ENCODE measurements at regions of chr2 and their contacts with region 1.

Region 1: GRCh38 chr2:207710814-207711740 is at the start of gene CCNYL1:
- DNase-seq: peak; percentile 99
- H3K4me3 Mint-ChIP-seq: peak within 1 kb of the TSS; percentile 88
- H3K27ac Mint-ChIP-seq: peak within 1 kb of the TSS; percentile 82
- H3K4me1 Mint-ChIP-seq: peaks cover 25% of the 10 kb centered on the region
- H3K27me3 Mint-ChIP-seq: no peaks in the 10 kb centered on the region
- total RNA-seq, gene CCNYL1: 5.7 to 6.4 TPM

Region 2: GRCh38 chr2:206915121-206915520 is 796.0 kb before region 1 on chr2:
- CTCF ChIA-PET with region 1: no interaction called
- POLR2A ChIA-PET with region 1: no interaction called
- intact Hi-C with region 1: no loop called
- DNase-seq: peak; percentile 31
- H3K4me3 Mint-ChIP-seq: no peak overlapping the region
- H3K27ac Mint-ChIP-seq: no peak overlapping the region
- H3K4me1 Mint-ChIP-seq: no peaks in the 10 kb centered on the region
- H3K27me3 Mint-ChIP-seq: peaks cover 2% of the 10 kb centered on the region

Region 3: GRCh38 chr2:207558106-207558505 is 153.0 kb before region 1 on chr2:
- CTCF ChIA-PET with region 1: no interaction called
- POLR2A ChIA-PET with region 1: no interaction called
- intact Hi-C with region 1: no loop called
- DNase-seq: no peak
- H3K4me3 Mint-ChIP-seq: no peak overlapping the region
- H3K27ac Mint-ChIP-seq: peak overlapping the region; percentile 43
- H3K4me1 Mint-ChIP-seq: peaks cover 19% of the 10 kb centered on the region
- H3K27me3 Mint-ChIP-seq: no peaks in the 10 kb centered on the region

Region 4: GRCh38 chr2:207692206-207693065 is 18.6 kb before region 1 on chr2:
- CTCF ChIA-PET with region 1: interaction called, 8 read pairs
- POLR2A ChIA-PET with region 1: no interaction called
- intact Hi-C with region 1: loop called (anchors 1 kb)
- DNase-seq: peak; percentile 54
- H3K4me3 Mint-ChIP-seq: no peak overlapping the region
- H3K27ac Mint-ChIP-seq: no peak overlapping the region
- H3K4me1 Mint-ChIP-seq: peaks cover 7% of the 10 kb centered on the region
- H3K27me3 Mint-ChIP-seq: peaks cover 1% of the 10 kb centered on the region

Region 5: DNA sequence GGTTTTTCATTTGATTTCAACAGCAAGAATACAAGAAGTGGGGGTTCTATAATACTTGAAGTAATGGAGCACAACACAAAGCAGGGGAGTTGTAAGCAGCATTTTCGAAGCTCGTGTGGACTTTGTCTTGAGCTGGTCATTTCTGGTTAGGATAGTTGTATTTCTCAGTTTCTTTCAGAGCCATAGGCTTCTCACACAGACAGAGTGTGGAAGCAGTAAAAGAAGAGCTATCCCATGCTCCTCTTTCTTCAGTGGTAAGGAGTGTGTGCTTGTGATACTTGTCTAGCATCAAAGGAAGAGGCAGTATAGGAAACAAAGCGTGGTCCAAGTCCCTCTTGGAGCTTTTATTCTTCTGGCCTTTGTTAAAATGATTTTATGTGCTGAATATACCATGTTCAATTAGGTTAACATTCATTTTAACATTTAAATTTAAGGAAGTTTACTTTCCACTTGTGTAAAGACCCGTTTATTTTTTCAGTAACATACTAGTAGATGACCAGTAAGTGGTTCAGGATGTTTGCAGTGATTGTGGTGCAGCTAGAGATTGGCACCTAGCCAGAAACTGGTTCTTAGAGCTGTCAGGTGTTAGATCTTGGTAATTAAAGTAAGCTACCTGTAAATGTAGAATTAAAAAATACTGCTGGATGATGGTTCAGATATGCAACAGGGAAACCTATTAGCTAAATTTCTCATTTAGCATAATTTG is 14.9 kb after region 1 on chr2:
- CTCF ChIA-PET with region 1: interaction called, 6 read pairs
- POLR2A ChIA-PET with region 1: interaction called, 15 read pairs
- intact Hi-C with region 1: loop called (anchors 1 kb)
- DNase-seq: no peak
- H3K4me3 Mint-ChIP-seq: no peak overlapping the region
- H3K27ac Mint-ChIP-seq: no peak overlapping the region
- H3K4me1 Mint-ChIP-seq: peaks cover 37% of the 10 kb centered on the region
- H3K27me3 Mint-ChIP-seq: no peaks in the 10 kb centered on the region

Region 6: DNA sequence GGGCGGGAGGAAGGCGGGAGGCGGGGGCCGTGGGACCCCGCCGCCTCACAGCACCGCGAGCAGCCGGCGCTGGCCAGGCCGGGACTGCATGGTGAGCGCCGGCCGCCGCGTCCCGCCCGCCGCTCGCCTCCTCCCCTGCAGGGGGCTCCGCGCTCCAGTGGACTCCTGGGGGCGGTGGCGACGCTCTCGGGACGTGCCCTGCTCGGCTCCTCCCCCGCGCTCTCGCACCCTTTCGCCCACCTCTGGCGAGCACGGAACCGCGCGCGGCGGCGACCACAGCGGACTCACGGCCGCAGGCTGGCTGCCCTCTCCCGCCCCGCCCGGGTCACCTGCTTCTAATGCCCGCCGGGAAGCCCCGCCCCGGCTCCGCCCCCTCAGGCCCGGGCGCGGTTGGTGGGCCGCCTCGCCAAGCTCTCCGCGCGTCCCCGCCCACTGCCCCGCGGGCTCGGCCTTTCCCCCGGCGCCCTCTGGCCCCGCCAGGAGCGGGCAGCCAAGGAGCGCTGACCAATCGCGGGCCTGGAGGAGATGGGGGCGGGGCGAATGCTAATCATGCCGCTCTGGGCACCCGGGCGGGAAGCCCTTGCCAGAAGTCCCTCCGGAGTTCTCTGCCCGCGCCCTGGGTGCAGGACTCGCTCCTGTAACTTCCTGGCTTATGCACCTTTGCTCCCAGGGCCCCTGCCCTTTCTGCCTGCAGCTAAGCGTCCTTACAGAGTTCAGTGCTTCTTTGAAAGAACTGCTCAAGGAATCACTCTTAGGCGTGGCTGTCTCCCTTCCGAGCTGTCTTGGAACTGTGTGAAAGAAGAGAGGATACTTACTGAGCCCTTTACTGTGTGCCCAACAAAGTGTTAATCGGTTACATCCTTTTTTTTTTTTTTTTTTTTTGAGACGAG is 58.8 kb after region 1 on chr2 and contains the start of gene FZD5:
- CTCF ChIA-PET with region 1: no interaction called
- POLR2A ChIA-PET with region 1: no interaction called
- intact Hi-C with region 1: loop called (anchors 1 kb)
- DNase-seq: peak; percentile 92
- H3K4me3 Mint-ChIP-seq: peak within 1 kb of the TSS; percentile 78
- H3K27ac Mint-ChIP-seq: no peak within 1 kb of the TSS
- H3K4me1 Mint-ChIP-seq: peaks cover 31% of the 10 kb centered on the region
- H3K27me3 Mint-ChIP-seq: peaks cover 30% of the 10 kb centered on the region
- total RNA-seq, gene FZD5: 1.3 to 1.7 TPM

Region 7: DNA sequence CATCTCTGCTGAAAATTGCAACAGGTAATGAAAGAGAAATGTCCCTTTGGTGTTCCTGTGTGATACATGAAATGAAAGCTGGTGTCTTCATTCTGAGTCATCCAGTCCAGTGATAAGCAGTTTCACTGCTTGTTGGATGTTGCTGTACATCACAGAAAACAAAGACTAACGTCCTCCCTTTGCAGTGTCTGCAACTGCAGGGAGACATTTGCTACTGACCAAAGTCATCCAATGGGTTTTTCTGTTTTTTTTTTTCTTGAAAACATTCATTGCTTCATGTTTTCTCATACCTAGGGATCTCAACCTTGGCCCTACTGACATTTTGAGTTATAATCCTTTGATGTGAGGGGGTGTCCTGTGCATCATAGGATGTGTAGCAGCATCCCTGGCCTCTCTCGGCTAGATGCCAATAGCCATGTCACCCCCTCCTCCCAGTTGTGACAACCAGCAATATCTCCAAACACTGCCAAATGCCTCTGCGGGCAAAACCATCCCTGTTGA is 122.2 kb after region 1 on chr2:
- CTCF ChIA-PET with region 1: no interaction called
- POLR2A ChIA-PET with region 1: no interaction called
- intact Hi-C with region 1: no loop called
- DNase-seq: no peak
- H3K4me3 Mint-ChIP-seq: no peak overlapping the region
- H3K27ac Mint-ChIP-seq: no peak overlapping the region
- H3K4me1 Mint-ChIP-seq: peaks cover 6% of the 10 kb centered on the region
- H3K27me3 Mint-ChIP-seq: no peaks in the 10 kb centered on the region